ENCODE measurements at regions of chr2 and their contacts with region 1.

Region 1: DNA sequence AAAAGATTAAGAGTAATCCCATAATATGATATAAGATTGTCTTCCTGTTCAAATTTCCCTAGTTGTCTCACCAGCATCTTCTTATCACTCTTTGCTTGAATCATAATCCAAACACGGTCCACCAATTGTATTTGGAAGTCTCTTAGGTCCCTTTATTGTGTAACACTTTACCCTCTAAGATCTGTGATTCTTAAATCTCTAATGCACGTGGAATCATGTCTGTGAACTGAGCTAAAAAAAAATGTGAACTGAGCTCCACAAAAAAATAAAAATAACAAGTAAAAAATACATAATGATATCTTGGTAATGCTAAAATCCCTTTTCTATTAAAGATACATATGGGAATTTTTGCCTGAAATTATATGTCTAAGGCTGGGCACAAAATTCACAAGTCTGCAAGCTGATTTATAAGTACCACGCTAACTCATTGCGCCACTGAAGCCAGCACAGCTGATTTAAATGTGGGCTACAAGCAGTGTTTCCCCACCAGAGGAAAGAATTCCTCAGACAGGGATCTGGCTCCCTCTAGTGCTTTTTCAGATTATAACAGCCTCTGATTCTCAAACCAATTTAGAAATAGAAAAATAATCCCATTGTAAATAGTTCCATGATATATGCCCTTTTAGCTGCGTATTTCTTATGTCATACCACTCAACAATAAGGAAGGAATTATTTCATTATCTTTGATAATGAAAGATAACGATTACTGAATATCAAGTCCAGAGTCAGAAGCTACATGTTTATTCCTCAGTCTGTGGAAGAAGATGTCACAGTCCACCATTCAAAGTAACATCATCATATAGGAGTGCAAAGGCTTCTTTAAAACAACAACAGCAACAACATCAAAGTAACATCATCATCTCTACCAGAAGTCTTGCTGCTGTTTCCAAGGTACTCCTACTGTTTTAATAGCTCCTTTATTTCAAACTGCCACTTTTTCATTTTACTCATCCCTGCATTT is 22.9 kb downstream of the RBM43 start:
- DNase-seq: peak; percentile 48
- H3K4me3 Mint-ChIP-seq: no peak overlapping the region
- H3K27ac Mint-ChIP-seq: no peak overlapping the region
- H3K4me1 Mint-ChIP-seq: no peaks in the 10 kb centered on the region
- H3K27me3 Mint-ChIP-seq: no peaks in the 10 kb centered on the region

Region 2: DNA sequence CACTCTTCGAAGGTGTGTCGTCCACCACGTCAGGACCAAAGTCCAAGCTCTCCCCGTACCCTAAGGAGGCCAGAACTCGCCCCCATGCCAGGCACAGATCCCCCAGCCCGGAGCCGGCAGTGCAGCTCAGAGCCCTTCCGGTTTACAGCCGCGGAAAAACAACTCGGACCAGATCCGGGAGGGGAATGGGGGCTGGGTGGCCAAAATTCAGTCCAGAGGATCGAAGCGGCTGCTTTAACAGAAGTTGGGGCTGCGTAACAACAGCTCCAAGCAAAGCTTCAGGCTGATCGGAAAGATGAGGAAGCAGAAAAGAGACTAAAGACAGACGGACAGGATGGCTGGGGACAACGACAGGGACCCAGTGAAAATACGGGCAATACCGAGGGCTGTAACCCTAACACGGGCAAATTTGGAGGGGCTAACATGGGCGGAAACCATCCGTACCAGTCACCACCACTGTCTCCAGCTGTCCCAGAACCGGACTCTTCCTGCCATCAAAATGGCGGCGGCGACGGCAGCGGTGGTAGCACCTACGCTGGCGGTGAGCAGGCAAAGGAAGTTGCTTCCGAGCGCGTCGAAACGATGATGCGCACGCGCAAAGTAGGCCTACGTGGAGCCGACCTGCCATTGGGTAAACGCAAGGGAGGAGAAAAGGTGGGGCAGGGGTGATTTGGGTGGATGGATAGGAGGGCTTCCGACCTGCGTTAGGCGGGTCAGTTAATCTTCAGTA is 1651.4 kb before region 1 on chr2 and contains the start of gene MMADHC:
- CTCF ChIA-PET with region 1: interaction called, 13 read pairs
- POLR2A ChIA-PET with region 1: no interaction called
- intact Hi-C with region 1: no loop called
- DNase-seq: peak; percentile 96
- H3K4me3 Mint-ChIP-seq: peak within 1 kb of the TSS; percentile 98
- H3K27ac Mint-ChIP-seq: peak within 1 kb of the TSS; percentile 97
- H3K4me1 Mint-ChIP-seq: peaks cover 42% of the 10 kb centered on the region
- H3K27me3 Mint-ChIP-seq: peaks cover 11% of the 10 kb centered on the region
- total RNA-seq, gene MMADHC: 130 to 132 TPM

Region 3: DNA sequence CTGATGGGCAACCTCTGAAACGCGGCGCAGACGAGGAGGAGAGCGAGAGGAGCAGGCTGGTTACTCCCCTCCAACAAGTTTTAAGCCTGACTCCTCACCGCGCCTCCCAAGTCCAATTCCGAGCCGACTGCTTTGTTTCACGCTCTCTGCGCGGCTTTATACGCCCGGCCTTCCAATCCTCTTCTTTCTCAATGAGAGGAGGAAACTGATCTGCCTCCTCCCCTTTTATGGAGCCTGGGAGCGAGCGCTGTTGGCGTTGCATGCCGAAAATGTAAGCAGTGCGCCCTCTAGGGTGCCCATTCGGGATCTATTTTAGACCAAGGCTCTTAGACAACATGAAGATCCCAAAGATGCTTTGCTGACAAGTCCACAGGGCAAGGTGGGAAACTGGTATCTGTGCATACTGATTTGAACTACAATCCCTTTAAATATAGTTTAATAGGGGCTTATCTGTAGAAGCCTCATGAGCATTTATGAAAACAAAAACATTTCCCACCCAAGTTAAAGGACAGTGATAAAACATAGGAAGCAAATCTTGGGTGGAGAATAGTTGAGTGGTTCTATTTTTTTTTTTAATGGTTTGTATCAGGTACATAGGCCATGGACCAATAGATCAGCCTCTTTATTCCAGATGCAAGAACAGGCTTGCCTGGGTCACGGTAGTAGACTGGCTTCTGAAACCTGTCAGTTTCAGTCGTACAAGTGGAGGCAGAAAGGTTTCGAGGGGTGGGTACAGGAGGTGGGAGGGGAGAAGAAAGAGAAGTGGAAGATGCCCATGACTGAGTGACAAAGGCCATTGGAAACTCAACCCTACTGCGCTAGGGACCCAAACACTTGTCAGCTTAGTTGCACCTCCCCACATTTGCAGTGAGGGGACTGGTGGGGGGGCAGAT is 751.0 kb before region 1 on chr2 and contains the start of gene RND3:
- CTCF ChIA-PET with region 1: no interaction called
- POLR2A ChIA-PET with region 1: no interaction called
- intact Hi-C with region 1: loop called (anchors 5 kb)
- DNase-seq: peak; percentile 70
- H3K4me3 Mint-ChIP-seq: peak within 1 kb of the TSS; percentile 29
- H3K27ac Mint-ChIP-seq: no peak within 1 kb of the TSS
- H3K4me1 Mint-ChIP-seq: peaks cover 10% of the 10 kb centered on the region
- H3K27me3 Mint-ChIP-seq: peaks cover 55% of the 10 kb centered on the region
- total RNA-seq, gene RND3: not detected

Region 4: DNA sequence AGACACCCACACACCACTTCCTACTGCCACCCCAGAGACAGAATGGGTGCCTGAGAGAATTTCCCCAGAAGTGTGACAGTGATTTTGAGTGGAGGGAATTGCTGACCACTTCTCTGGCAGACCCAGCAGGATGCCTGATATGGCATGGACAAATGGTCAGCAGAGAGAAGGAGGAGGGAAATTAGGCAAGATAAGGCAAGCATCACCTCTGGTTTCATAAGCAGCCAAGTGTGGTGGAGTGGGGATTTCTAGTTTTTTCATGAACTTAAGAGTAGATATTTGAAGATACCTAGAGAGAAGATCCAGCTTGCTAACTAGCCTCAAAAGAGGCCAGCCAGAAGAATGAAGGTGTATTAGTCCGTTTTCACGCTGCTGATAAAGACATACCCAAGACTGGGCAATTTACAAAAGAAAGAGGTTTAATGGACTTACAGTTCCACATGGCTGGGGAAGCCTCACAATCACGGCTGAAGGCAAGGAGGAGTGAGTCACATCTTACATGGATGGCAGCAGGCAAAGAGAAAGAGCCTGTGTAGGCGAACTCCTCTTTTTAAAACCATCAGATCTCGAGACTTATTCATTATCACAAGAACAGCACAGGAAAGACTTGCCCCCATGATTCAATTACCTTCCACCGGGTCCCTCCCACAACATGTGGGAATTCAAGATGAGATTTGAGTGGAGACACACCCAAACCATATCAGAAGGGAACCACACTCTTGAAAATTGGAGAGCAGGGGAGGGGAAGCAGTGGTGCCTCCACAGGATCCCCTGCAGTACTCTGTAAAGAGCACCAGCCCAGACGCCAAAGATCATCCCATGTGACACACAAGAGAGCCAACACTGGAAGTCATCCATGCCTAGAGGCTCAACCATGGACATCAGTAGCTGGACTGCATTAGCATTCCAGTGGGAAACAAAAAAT is 41.4 kb before region 1 on chr2:
- CTCF ChIA-PET with region 1: no interaction called
- POLR2A ChIA-PET with region 1: no interaction called
- intact Hi-C with region 1: no loop called
- DNase-seq: no peak
- H3K4me3 Mint-ChIP-seq: no peak overlapping the region
- H3K27ac Mint-ChIP-seq: no peak overlapping the region
- H3K4me1 Mint-ChIP-seq: peaks cover 1% of the 10 kb centered on the region
- H3K27me3 Mint-ChIP-seq: peaks cover 5% of the 10 kb centered on the region

Region 5: GRCh38 chr2:151953467-151953866 is 714.7 kb after region 1 on chr2:
- CTCF ChIA-PET with region 1: no interaction called
- POLR2A ChIA-PET with region 1: no interaction called
- intact Hi-C with region 1: no loop called
- DNase-seq: no peak
- H3K4me3 Mint-ChIP-seq: no peak overlapping the region
- H3K27ac Mint-ChIP-seq: no peak overlapping the region
- H3K4me1 Mint-ChIP-seq: no peaks in the 10 kb centered on the region
- H3K27me3 Mint-ChIP-seq: peaks cover 5% of the 10 kb centered on the region

Measured in activated CD4-positive, alpha-beta memory T cell treated with anti-CD3 and anti-CD28 coated beads for 36 hours (primary cell).